Right lobe of liver (tissue), 6 donors: ENCODE measurements at regions of chr13 and their contacts with region 1.

Region 1: DNA sequence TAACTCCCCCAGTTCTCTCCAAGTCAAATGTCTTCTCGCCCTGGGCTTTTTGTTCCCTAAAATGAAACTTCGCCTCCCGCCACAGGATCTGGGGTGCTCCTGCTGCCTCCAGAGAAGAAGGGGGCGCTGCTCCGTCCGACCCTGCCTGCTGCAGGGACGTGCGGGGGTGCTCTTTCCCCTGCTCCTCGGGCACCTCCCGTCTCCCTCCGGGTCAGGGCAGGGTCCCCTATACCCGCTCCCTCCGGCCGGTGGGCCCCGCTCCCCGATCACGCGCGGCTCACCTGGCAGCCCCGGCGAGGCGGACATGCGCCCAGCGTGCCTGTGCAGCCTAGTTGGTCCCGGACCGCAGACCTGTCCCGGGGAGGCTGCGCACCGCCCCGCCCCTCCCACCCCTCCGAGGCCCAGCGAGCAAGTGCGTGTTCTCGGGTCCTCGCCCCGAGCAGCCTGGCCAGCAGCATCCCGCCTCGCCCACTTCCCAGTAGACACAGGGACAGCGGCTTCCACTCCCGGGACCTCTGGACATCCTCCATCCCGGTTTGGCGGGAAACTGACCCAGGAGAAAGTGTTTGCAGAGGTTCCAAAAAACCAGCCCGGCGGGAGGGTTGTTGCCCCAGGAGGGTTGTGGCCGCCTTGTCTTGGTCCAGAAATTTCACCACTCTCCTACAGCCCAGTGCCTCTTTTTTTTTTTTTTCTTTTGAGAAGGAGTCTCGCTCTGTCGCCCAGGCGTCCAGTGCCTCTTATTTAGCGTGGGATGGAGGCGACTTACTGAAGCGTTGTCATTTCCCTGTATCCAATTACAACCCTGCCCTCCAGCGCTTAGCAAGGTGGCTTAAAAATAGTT is at the start of gene OXGR1:
- DNase-seq: peak in 2 of 3 donors; percentile 20 to 54
- ATAC-seq: peak in 1 of 4 donors; percentile 29
- H3K4me3 ChIP-seq: peak within 1 kb of the TSS in 1 of 3 donors; percentile 16
- H3K27ac ChIP-seq: no peak within 1 kb of the TSS
- H3K4me1 ChIP-seq: no peaks in the 10 kb centered on the region
- H3K27me3 ChIP-seq: peaks cover 4 to 7% of the 10 kb centered on the region in 2 donors
- CTCF ChIP-seq: no peak
- POLR2A ChIP-seq: no peak
- total RNA-seq, gene OXGR1: not detected

Region 2: DNA sequence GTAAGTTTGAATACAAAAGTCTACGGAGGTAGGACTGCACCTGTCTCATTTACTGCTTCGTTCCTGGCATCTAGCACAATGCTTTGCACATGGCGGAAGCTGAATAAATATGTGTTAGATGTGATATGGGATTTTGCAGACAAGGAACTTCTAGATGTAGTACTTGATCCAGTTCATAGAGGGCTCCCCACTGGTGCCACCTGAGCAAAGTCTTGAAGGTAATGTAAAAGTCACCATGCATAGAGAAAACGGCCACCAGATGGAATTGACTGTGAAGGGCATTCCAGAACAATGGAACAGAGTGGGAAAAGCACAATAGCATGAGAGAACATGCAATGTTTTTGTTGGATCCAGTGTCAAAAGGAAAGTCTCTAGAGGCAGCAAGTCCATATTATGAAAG is 695.0 kb before region 1 on chr13:
- intact Hi-C with region 1: loop called in 1 of 2 experiments (anchors 10 kb)
- DNase-seq: no peak
- ATAC-seq: no peak
- H3K4me3 ChIP-seq: no peak overlapping the region
- H3K27ac ChIP-seq: no peak overlapping the region
- H3K4me1 ChIP-seq: no peaks in the 10 kb centered on the region
- H3K27me3 ChIP-seq: no peaks in the 10 kb centered on the region
- CTCF ChIP-seq: no peak
- POLR2A ChIP-seq: no peak

Region 3: GRCh38 chr13:97194479-97194878 is 200.2 kb after region 1 on chr13:
- intact Hi-C with region 1: no loop called
- DNase-seq: no peak
- ATAC-seq: peak; percentile 44 to 80 (median 60)
- H3K4me3 ChIP-seq: no peak overlapping the region
- H3K27ac ChIP-seq: no peak overlapping the region
- H3K4me1 ChIP-seq: no peaks in the 10 kb centered on the region
- H3K27me3 ChIP-seq: no peaks in the 10 kb centered on the region
- CTCF ChIP-seq: no peak
- POLR2A ChIP-seq: no peak